ENCODE measurements at regions of chrX and their contacts with region 1.

Region 1: DNA sequence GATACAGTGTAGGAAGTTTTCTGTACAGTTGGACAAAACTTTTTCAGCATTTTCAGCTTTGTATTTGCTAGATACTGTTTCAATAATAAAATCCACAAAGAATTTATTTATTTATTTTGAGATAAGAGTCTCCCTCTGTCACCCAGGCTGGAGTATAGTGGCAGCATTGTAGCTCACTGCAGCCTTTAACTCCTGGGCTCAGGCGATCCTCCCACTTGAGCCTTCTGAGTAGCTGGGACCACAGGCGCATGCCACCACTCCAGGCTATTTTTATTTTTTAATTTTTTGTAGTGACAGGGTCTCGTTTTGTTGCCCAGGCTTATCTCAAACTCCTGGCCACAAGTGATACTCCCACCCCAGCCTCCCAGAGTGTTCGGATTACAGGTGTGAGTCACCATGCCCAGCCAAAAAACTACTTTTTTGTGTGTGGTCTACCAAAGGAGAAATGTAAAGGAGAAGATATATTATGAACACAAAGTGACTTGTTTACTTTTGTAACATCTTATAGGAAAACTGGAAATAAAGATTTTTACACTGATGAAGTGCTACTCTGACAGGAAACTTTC is 13.0 kb upstream of the SOWAHD start:
- DNase-seq: no peak
- H3K4me3 ChIP-seq: no peak overlapping the region
- H3K27ac ChIP-seq: no peak overlapping the region
- H3K4me1 ChIP-seq: no peaks in the 10 kb centered on the region
- H3K27me3 ChIP-seq: no peaks in the 10 kb centered on the region
- CTCF ChIP-seq: no peak

Region 2: GRCh38 chrX:119574394-119575266 is 170.7 kb before region 1 on chrX and contains the start of gene UBE2A:
- CTCF ChIA-PET with region 1: no interaction called
- POLR2A ChIA-PET with region 1: interaction called, 11 read pairs
- intact Hi-C with region 1: no loop called
- DNase-seq: peak; percentile 86 to 93
- H3K4me3 ChIP-seq: peak within 1 kb of the TSS; percentile 83
- H3K27ac ChIP-seq: peak within 1 kb of the TSS; percentile 83
- H3K4me1 ChIP-seq: peaks cover 27% of the 10 kb centered on the region
- H3K27me3 ChIP-seq: no peaks in the 10 kb centered on the region
- CTCF ChIP-seq: peak; percentile 61; the same call in 1 of the 2 replicates
- total RNA-seq, gene UBE2A: 103 and 119 TPM in 2 replicates

Region 3: GRCh38 chrX:119698845-119699244 is 46.5 kb before region 1 on chrX:
- CTCF ChIA-PET with region 1: no interaction called
- POLR2A ChIA-PET with region 1: no interaction called
- intact Hi-C with region 1: loop called (anchors 5 kb)
- DNase-seq: peak; percentile 35 to 63
- H3K4me3 ChIP-seq: no peak overlapping the region
- H3K27ac ChIP-seq: no peak overlapping the region
- H3K4me1 ChIP-seq: no peaks in the 10 kb centered on the region
- H3K27me3 ChIP-seq: peaks cover 2% of the 10 kb centered on the region; the same call in 1 of the 2 replicates
- CTCF ChIP-seq: peak; percentile 75

Region 4: GRCh38 chrX:119729408-119730201 is 15.8 kb before region 1 on chrX:
- CTCF ChIA-PET with region 1: interaction called, 17 read pairs
- POLR2A ChIA-PET with region 1: no interaction called
- intact Hi-C with region 1: no loop called
- DNase-seq: peak; percentile 57 to 63
- H3K4me3 ChIP-seq: no peak overlapping the region
- H3K27ac ChIP-seq: no peak overlapping the region
- H3K4me1 ChIP-seq: no peaks in the 10 kb centered on the region
- H3K27me3 ChIP-seq: no peaks in the 10 kb centered on the region
- CTCF ChIP-seq: peak; percentile 78

Measured in PC-9 (cell line).